Right ventricle myocardium inferior (tissue), 1 donor: ENCODE measurements at regions of chr9 and their contacts with region 1.

Region 1: GRCh38 chr9:129177791-129178559 is at the start of gene IER5L:
- DNase-seq: peak; percentile 98
- ATAC-seq: peak; percentile 84
- total RNA-seq, gene IER5L: 4.6 TPM

Region 2: DNA sequence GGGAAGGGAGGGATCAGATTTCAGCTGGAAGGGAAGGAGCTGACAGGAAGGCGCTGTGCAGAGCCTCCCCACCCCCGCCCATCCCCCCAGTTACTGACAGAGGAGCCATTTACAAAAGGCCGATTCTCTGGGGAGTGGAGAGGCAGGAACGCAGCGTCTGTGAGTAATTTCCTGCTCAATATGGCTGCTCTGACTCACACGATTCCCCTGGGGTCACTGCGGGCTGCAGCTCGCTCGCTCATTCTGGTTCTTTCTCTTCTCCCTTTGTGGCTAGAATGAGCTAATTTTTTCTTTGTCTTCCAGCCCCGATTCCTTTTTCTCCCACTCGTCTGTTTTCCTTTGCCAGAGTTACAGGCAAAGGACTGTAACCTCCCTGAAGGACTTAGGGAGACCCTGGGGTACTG is 38.0 kb before region 1 on chr9:
- intact Hi-C with region 1: loop called (anchors 1 kb)
- DNase-seq: peak; percentile 93
- ATAC-seq: peak; percentile 84

Region 3: DNA sequence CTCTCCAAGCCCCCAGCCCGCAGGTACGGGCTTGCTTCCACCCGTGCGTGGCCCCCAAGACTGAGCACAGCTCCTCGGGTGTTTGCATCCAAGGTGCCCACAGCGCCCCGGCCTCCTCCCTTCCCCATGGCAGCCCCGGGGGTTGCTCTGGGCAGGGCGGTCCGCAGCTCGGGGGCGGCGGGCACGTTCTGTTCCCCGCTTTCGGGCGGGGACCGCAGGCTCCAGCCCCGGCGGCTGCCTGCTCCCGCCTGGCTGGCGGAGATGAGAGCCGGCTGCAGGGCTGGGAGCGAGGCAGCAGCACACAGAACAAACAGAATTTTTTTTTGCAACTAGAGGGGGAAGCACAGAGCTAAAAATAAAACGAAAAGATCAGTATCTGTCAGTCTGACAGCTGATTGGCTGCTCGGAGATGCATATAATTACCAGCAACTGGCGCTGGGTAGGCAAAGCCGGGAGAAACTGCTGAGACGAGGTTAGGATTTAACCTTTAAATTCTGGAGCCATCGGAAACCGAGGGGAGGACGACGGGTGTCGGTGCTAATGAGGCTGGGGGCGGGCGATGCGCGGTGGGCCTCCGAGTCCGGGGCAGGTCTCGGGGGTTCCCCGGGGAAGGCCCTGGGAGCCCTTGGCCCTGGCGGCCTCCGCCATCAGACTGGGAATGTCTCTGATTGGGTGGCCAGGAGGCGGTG is 142.7 kb after region 1 on chr9:
- intact Hi-C with region 1: loop called (anchors 2 kb)
- DNase-seq: peak; percentile 86
- ATAC-seq: peak; percentile 78